Activated T-helper 1 cell treated with anti-CD3 and anti-CD28 coated beads, Interleukin-12 subunit alpha, Interleukin-12 subunit beta, Interleukin-2, Interleukin-4 antibody, amounts not matched to agents 30 ng/mL and 10 ng/mL and 1 ng/mL, durations not matched to agents 14 hours and 24 hours and 36 hours (primary cell): ENCODE measurements at regions of chr6 and their contacts with region 1.

Region 1: DNA sequence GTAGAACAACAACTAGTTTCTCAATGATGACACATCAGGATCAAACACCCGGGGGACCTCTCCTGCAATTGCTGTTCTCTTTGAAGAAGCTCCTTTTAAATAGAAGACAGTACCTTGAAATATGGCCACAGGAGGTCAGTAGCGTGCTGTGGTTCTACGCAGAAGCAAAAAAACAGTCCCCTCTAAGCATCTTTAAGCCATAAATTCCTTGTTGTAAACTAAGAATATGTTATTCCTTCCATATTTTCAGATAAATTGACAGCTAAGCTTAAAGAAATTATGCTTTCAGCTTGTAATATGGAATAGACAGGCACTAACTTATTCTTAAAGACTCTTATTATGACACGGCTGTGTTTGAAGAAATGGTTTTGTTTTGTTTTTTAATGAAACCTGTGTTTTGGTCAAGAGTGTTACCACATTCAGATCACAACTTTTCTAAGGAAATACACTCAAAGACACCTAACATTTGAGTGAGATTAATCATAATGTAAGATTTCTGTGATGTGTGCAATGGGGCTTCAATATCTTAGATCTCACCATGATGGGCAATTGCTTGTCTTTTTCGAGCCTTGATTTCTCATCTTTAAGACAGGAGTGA is 49.7 kb upstream of the IL20RA start:
- DNase-seq: peak; percentile 38
- H3K4me3 Mint-ChIP-seq: no peak overlapping the region
- H3K27ac Mint-ChIP-seq: no peak overlapping the region
- H3K4me1 Mint-ChIP-seq: peaks cover 57% of the 10 kb centered on the region
- H3K27me3 Mint-ChIP-seq: no peaks in the 10 kb centered on the region

Region 2: DNA sequence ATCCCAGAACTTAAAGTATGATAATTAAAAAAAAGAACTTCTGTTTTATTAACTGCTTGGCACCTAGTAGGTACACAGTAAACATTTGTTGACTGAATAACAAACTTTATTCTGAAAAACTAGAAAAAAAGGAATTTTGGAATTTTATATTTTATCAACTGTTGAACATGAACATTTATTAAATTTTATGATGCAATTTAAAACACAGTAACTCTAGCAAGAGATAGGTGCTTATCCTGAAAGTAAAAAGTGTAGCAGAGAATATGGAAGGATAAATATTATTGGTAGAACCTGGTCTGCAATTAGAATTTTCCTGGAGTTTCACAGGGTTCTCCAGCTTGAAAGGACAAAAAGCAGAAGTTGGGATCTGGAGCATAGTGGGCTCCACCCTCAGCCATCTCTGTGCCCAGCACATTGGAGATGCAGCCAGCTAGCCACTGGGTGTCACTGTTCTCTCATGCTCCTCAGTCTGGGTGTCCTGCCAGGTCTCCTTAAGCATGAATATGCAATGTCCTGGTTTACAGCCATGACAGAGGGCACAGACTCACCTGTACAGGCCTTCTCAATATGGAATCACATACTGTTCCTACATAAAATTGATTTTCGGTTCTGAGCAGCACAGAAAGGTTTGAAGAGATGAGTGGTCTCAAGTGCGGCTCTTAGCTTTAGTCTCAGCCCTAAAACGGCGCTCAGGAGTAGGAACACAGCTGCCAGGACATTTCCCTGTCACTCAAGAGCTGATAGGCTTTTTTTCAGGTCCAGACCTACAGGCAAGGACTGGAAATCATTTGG is 18.0 kb before region 1 on chr6:
- intact Hi-C with region 1: loop called (anchors 1 kb)
- DNase-seq: peak; percentile 52
- H3K4me3 Mint-ChIP-seq: no peak overlapping the region
- H3K27ac Mint-ChIP-seq: no peak overlapping the region
- H3K4me1 Mint-ChIP-seq: no peaks in the 10 kb centered on the region
- H3K27me3 Mint-ChIP-seq: peaks cover 30% of the 10 kb centered on the region

Region 3: GRCh38 chr6:137218917-137219663 is 124.6 kb after region 1 on chr6 and contains the start of gene IFNGR1:
- intact Hi-C with region 1: loop called (anchors 1 kb)
- DNase-seq: peak; percentile 94
- H3K4me3 Mint-ChIP-seq: peak within 1 kb of the TSS; percentile 100
- H3K27ac Mint-ChIP-seq: peak within 1 kb of the TSS; percentile 100
- H3K4me1 Mint-ChIP-seq: peaks cover 56% of the 10 kb centered on the region
- H3K27me3 Mint-ChIP-seq: peaks cover 4% of the 10 kb centered on the region
- total RNA-seq, gene IFNGR1: 12.5 and 12.6 TPM in 2 replicates

Region 4: GRCh38 chr6:137313928-137314855 is 219.7 kb after region 1 on chr6:
- intact Hi-C with region 1: loop called (anchors 1 kb)
- DNase-seq: peak; percentile 32
- H3K4me3 Mint-ChIP-seq: no peak overlapping the region
- H3K27ac Mint-ChIP-seq: no peak overlapping the region
- H3K4me1 Mint-ChIP-seq: peaks cover 9% of the 10 kb centered on the region
- H3K27me3 Mint-ChIP-seq: peaks cover 15% of the 10 kb centered on the region

Region 5: GRCh38 chr6:137661601-137662000 is 567.1 kb after region 1 on chr6:
- intact Hi-C with region 1: loop called (anchors 1 kb)
- DNase-seq: no peak
- H3K4me3 Mint-ChIP-seq: no peak overlapping the region
- H3K27ac Mint-ChIP-seq: no peak overlapping the region
- H3K4me1 Mint-ChIP-seq: peaks cover 58% of the 10 kb centered on the region
- H3K27me3 Mint-ChIP-seq: peaks cover 2% of the 10 kb centered on the region